ENCODE measurements at regions of chrX and their contacts with region 1.

Region 1: GRCh38 chrX:71998836-71999509 is 88.3 kb downstream of the NHSL2 start:
- DNase-seq: no peak
- H3K4me3 ChIP-seq: no peak overlapping the region
- CTCF ChIP-seq: no peak

Region 2: GRCh38 chrX:71910986-71911730 is 87.8 kb before region 1 on chrX:
- CTCF ChIA-PET with region 1: interaction called, 11 read pairs
- POLR2A ChIA-PET with region 1: no interaction called
- DNase-seq: no peak
- H3K4me3 ChIP-seq: peak overlapping the region; percentile 44
- CTCF ChIP-seq: peak; percentile 13

Region 3: GRCh38 chrX:72011734-72012133 is 12.8 kb after region 1 on chrX:
- CTCF ChIA-PET with region 1: interaction called, 19 read pairs
- POLR2A ChIA-PET with region 1: no interaction called
- DNase-seq: no peak
- H3K4me3 ChIP-seq: no peak overlapping the region
- CTCF ChIP-seq: no peak

Region 4: GRCh38 chrX:72126539-72127140 is 127.7 kb after region 1 on chrX:
- CTCF ChIA-PET with region 1: interaction called, 40 read pairs
- POLR2A ChIA-PET with region 1: no interaction called
- DNase-seq: peak; percentile 40
- H3K4me3 ChIP-seq: no peak overlapping the region
- CTCF ChIP-seq: peak; percentile 77

Measured in AG04449 (cell line).